Activated CD4-positive, alpha-beta memory T cell treated with anti-CD3 and anti-CD28 coated beads, Interleukin-2, amount 10 ng/mL, durations not matched to agents 7 days and 5 days (primary cell): ENCODE measurements at regions of chr3 and their contacts with region 1.

Region 1: GRCh38 chr3:18988614-18989229 is 159.6 kb upstream of the KCNH8 start:
- DNase-seq: no peak
- H3K4me3 Mint-ChIP-seq: no peak overlapping the region
- H3K27ac Mint-ChIP-seq: no peak overlapping the region
- H3K4me1 Mint-ChIP-seq: peaks cover 16% of the 10 kb centered on the region
- H3K27me3 Mint-ChIP-seq: peaks cover 38% of the 10 kb centered on the region

Region 2: DNA sequence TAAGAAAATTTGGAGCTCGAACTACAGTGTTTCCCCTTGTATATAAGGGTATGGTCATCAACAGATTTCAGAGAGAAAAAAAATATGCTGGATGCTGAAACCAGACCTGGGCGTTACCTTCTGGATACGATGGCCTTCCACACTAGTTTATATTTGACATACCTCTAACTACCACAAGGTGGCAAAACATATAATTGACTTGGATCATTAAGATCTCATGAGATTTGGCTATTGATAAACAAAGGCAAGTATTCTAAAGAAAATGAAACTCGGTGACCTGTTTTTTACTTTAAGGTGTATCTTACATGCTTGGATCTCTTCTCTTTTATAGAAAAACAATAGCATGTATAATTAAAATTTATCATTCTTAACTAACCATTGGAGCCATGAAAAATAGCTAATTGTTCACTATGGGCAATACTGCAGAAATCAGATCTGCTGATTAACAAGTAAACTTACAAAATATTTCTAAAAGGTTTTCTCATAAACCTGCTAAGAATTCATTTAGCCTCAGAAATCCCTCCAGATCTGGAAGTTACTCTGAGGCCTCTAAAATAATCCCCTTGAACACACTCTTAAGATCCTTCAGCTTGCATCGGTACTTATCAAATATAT is 141.0 kb before region 1 on chr3:
- CTCF ChIA-PET with region 1: interaction called, 17 read pairs
- POLR2A ChIA-PET with region 1: no interaction called
- DNase-seq: no peak
- H3K4me3 Mint-ChIP-seq: no peak overlapping the region
- H3K27ac Mint-ChIP-seq: no peak overlapping the region
- H3K4me1 Mint-ChIP-seq: peaks cover 6% of the 10 kb centered on the region
- H3K27me3 Mint-ChIP-seq: no peaks in the 10 kb centered on the region